Adrenal gland (tissue), 19 donors: ENCODE measurements at regions of chr11 and their contacts with region 1.

Region 1: GRCh38 chr11:20647976-20648565 is 21.3 kb upstream of the NELL1 start:
- DNase-seq: peak; percentile 22 to 72 (median 59)
- H3K4me3 ChIP-seq: no peak overlapping the region
- H3K27ac ChIP-seq: no peak overlapping the region
- H3K4me1 ChIP-seq: no peaks in the 10 kb centered on the region
- H3K27me3 ChIP-seq: no peaks in the 10 kb centered on the region
- CTCF ChIP-seq: peak; percentile 81 to 90 (median 84)
- POLR2A ChIP-seq: no peak

Region 2: DNA sequence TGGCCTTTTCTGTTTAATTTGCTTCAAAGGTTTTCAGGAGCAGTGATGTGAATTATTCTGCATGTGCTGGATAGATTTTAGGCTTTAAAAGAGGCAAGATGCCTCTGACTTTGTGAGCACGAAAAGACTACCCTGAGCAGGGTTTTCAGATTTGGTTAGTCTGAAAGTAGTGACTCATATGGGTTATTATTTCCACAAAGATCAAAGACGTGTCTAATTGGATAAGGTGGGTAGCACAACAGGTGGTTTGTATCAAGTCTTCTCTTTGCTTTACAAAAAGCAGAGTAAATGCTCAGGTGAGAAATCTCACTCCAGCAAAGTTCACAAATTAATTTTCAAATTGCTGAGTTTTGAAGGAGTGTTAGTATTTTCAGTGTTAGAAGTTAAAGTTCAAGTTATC is 450.2 kb before region 1 on chr11:
- intact Hi-C with region 1: no loop called
- DNase-seq: no peak
- H3K4me3 ChIP-seq: no peak overlapping the region
- H3K27ac ChIP-seq: no peak overlapping the region
- H3K4me1 ChIP-seq: no peaks in the 10 kb centered on the region
- H3K27me3 ChIP-seq: no peaks in the 10 kb centered on the region
- CTCF ChIP-seq: no peak
- POLR2A ChIP-seq: no peak

Region 3: GRCh38 chr11:21511835-21512440 is 863.9 kb after region 1 on chr11:
- intact Hi-C with region 1: loop called in 1 of 2 experiments (anchors 10 kb)
- DNase-seq: peak; percentile 39 to 79 (median 67)
- H3K4me3 ChIP-seq: no peak overlapping the region
- H3K27ac ChIP-seq: no peak overlapping the region
- H3K4me1 ChIP-seq: no peaks in the 10 kb centered on the region
- H3K27me3 ChIP-seq: no peaks in the 10 kb centered on the region
- CTCF ChIP-seq: peak; percentile 19 to 49 (median 38)
- POLR2A ChIP-seq: no peak